ENCODE measurements at regions of chr1 and their contacts with region 1.

Region 1: GRCh38 chr1:184075055-184076029 is 23.8 kb downstream of the TSEN15 start:
- DNase-seq: no peak
- H3K4me3 Mint-ChIP-seq: no peak overlapping the region
- H3K27ac Mint-ChIP-seq: no peak overlapping the region
- H3K4me1 Mint-ChIP-seq: peaks cover 19% of the 10 kb centered on the region
- H3K27me3 Mint-ChIP-seq: no peaks in the 10 kb centered on the region

Region 2: DNA sequence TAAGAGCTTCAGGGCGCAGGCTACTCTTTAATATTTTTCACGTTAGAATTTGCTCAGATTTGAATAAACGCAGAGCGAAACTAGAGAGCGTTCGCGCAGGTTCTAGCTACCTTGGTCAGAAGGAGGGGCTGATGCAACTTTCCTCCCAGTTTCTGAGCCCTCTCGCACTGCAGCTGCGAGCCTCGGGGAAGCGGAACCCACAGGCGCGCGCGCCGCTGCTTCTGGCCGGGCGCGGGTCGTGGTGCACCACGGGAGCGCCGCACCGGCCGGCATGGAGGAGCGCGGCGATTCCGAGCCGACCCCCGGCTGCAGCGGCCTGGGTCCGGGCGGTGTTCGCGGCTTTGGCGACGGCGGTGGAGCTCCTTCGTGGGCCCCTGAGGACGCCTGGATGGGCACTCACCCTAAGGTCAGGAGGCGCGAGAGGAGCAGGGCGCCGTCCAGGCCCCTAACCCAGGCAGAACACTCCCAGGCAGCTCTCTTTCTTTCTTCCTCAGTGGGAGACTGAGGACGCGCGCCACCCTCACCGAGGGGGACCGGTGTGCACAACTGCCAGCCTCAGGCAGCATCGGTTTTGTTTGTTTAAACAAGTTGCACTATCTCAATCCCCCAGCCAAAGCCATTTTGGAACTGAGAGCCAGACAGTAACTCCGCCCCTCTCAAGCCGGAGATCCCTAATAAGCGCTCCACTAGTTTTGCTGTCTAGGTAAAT is 23.7 kb before region 1 on chr1 and contains the start of gene TSEN15:
- intact Hi-C with region 1: no loop called
- DNase-seq: peak; percentile 71
- H3K4me3 Mint-ChIP-seq: peak within 1 kb of the TSS; percentile 99
- H3K27ac Mint-ChIP-seq: peak within 1 kb of the TSS; percentile 99
- H3K4me1 Mint-ChIP-seq: peaks cover 40% of the 10 kb centered on the region
- H3K27me3 Mint-ChIP-seq: peaks cover 28% of the 10 kb centered on the region
- total RNA-seq, gene TSEN15: 49.8 and 50.2 TPM in 2 replicates

Region 3: GRCh38 chr1:184166485-184166884 is 91.1 kb after region 1 on chr1:
- intact Hi-C with region 1: no loop called
- DNase-seq: no peak
- H3K4me3 Mint-ChIP-seq: no peak overlapping the region
- H3K27ac Mint-ChIP-seq: no peak overlapping the region
- H3K4me1 Mint-ChIP-seq: peaks cover 24% of the 10 kb centered on the region
- H3K27me3 Mint-ChIP-seq: peaks cover 17% of the 10 kb centered on the region

Region 4: GRCh38 chr1:184386312-184387068 is 311.1 kb after region 1 on chr1 and contains the start of gene C1orf21:
- intact Hi-C with region 1: loop called (anchors 5 kb)
- DNase-seq: peak; percentile 75
- H3K4me3 Mint-ChIP-seq: peak within 1 kb of the TSS; percentile 86
- H3K27ac Mint-ChIP-seq: peak within 1 kb of the TSS; percentile 53
- H3K4me1 Mint-ChIP-seq: peaks cover 12% of the 10 kb centered on the region
- H3K27me3 Mint-ChIP-seq: peaks cover 71% of the 10 kb centered on the region
- total RNA-seq, gene C1orf21: 1.8 and 4.1 TPM in 2 replicates

Region 5: GRCh38 chr1:184457500-184457899 is 382.2 kb after region 1 on chr1:
- intact Hi-C with region 1: no loop called
- DNase-seq: no peak
- H3K4me3 Mint-ChIP-seq: no peak overlapping the region
- H3K27ac Mint-ChIP-seq: no peak overlapping the region
- H3K4me1 Mint-ChIP-seq: no peaks in the 10 kb centered on the region
- H3K27me3 Mint-ChIP-seq: peaks cover 3% of the 10 kb centered on the region

Region 6: GRCh38 chr1:184563308-184563707 is 488.0 kb after region 1 on chr1:
- intact Hi-C with region 1: loop called (anchors 10 kb)
- DNase-seq: no peak
- H3K4me3 Mint-ChIP-seq: no peak overlapping the region
- H3K27ac Mint-ChIP-seq: no peak overlapping the region
- H3K4me1 Mint-ChIP-seq: no peaks in the 10 kb centered on the region
- H3K27me3 Mint-ChIP-seq: peaks cover 2% of the 10 kb centered on the region

Region 7: GRCh38 chr1:184691719-184692324 is 616.5 kb after region 1 on chr1:
- intact Hi-C with region 1: loop called (anchors 10 kb)
- DNase-seq: no peak
- H3K4me3 Mint-ChIP-seq: no peak overlapping the region
- H3K27ac Mint-ChIP-seq: no peak overlapping the region
- H3K4me1 Mint-ChIP-seq: peaks cover 9% of the 10 kb centered on the region
- H3K27me3 Mint-ChIP-seq: no peaks in the 10 kb centered on the region